Activated T-helper 1 cell treated with anti-CD3 and anti-CD28 coated beads, Interleukin-12 subunit alpha, Interleukin-12 subunit beta, Interleukin-2, Interleukin-4 antibody, amounts not matched to agents 30 ng/mL and 10 ng/mL and 1 ng/mL, durations not matched to agents 14 hours and 24 hours and 36 hours (primary cell): ENCODE measurements at regions of chr1 and their contacts with region 1.

Region 1: GRCh38 chr1:94335950-94336349 is 82.2 kb upstream of the ABCD3 start:
- DNase-seq: no peak
- H3K4me3 Mint-ChIP-seq: no peak overlapping the region
- H3K27ac Mint-ChIP-seq: no peak overlapping the region
- H3K4me1 Mint-ChIP-seq: no peaks in the 10 kb centered on the region
- H3K27me3 Mint-ChIP-seq: peaks cover 6% of the 10 kb centered on the region

Region 2: DNA sequence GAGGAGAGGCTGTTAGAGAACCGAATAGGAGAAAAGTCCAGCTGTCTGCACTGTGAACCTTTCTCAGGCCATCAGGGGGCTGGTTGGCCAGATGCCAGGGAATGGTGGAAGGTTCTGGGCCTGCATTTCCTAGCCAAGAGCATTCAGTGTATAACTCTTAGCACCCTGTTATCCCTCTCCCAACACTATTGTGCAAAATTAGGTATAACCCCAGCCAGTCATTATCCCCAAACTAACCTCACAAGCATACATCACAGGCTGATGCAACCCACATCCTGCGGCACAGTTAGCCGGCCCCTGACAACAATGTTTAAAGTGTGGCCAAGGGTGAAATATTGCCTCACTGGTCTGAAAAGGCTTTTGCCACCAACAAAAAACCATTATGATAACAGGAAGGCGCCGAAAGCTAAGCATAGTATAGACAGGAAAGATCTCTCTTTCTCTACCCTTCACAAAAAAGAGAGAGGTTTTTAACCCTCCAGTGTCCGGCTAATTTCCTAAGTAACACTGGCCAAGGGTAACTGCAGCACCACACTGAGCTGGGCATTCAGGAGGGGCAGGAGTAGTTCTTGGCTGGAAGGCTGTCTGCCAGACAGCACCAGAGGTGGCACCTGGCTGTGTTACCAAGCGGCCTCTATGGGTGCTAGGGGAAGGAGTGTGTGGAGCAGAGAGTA is 577.0 kb before region 1 on chr1:
- intact Hi-C with region 1: no loop called
- DNase-seq: peak; percentile 4
- H3K4me3 Mint-ChIP-seq: no peak overlapping the region
- H3K27ac Mint-ChIP-seq: no peak overlapping the region
- H3K4me1 Mint-ChIP-seq: peaks cover 14% of the 10 kb centered on the region
- H3K27me3 Mint-ChIP-seq: no peaks in the 10 kb centered on the region

Region 3: GRCh38 chr1:93839307-93839706 is 496.6 kb before region 1 on chr1:
- intact Hi-C with region 1: no loop called
- DNase-seq: no peak
- H3K4me3 Mint-ChIP-seq: no peak overlapping the region
- H3K27ac Mint-ChIP-seq: no peak overlapping the region
- H3K4me1 Mint-ChIP-seq: peaks cover 2% of the 10 kb centered on the region
- H3K27me3 Mint-ChIP-seq: peaks cover 4% of the 10 kb centered on the region

Region 4: GRCh38 chr1:94025383-94026340 is 310.3 kb before region 1 on chr1:
- intact Hi-C with region 1: loop called (anchors 1 kb)
- DNase-seq: no peak
- H3K4me3 Mint-ChIP-seq: no peak overlapping the region
- H3K27ac Mint-ChIP-seq: no peak overlapping the region
- H3K4me1 Mint-ChIP-seq: peaks cover 20% of the 10 kb centered on the region
- H3K27me3 Mint-ChIP-seq: peaks cover 12% of the 10 kb centered on the region

Region 5: DNA sequence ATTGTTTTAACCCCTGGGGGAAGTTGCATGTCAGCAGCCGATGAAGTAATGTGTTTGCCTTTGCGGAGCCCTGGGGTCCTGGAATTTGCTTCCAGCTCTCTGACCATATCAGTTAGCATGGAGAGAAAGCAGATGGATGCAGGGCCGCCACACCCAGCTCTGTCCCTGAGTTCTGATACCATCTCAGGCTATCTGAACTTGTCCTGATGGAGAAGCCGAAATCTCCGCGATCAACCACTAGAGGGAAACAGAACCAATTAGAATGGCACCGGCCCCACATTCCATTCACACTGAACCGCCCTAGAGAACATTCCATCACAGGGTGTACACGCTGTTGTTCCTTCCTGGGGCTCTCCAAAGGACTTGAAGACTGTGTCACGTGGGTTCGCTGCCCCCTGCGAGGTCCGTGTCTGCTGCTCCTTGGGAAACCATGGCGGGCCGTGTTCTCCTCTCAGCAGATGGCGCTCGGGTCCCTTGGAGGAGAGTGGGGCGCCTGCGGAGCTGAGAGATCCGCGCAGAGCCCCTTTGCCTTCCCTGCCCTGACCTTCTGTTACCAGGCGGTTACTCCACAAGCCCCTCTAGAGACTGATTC is 290.4 kb before region 1 on chr1:
- intact Hi-C with region 1: loop called (anchors 1 kb)
- DNase-seq: no peak
- H3K4me3 Mint-ChIP-seq: peak overlapping the region; percentile 54
- H3K27ac Mint-ChIP-seq: no peak overlapping the region
- H3K4me1 Mint-ChIP-seq: peaks cover 5% of the 10 kb centered on the region
- H3K27me3 Mint-ChIP-seq: peaks cover 6% of the 10 kb centered on the region

Region 6: DNA sequence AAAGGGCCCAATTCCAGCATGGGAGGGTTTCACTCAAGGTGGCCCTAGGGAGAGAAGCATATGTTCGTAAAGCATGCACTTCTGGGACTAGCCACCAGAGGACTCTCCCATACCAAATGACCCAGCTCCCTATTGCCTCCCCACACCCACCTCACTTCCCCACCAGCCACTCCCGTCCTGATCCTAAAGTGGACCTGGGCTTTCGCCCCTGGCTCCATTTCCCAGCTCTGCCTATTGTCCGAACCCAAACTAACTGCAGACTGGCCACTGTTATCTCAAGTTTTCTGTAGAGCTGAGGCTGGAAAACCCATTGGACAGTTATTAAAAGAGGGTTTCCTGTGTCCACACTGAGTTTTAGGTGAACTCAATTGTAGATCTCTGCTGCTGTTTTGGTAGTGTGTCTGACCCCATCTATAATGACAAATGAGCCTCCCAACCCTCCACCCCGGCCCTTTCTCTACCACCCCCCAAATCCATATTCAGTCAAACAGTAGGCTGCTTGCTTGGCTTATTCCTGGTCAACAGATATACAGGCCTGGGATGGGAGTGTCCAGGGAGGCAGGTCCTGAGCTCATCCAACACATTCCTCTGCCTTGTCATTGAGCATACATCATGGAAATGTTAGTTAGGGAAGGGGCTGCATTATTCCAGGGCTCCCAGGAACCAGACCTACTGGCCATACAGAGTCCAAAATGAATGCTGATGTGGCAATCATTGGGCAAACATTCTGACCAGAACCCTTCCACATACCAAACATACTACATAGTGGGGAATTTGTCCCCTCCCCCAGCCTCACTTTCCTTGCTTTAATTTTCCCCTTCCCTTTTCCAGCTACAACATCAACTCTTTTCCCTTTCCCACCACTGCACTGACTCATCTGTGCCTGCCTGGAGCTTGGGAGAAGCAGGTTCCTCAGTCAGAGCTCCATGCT is 274.2 kb before region 1 on chr1:
- intact Hi-C with region 1: loop called (anchors 1 kb)
- DNase-seq: peak; percentile 5
- H3K4me3 Mint-ChIP-seq: no peak overlapping the region
- H3K27ac Mint-ChIP-seq: no peak overlapping the region
- H3K4me1 Mint-ChIP-seq: no peaks in the 10 kb centered on the region
- H3K27me3 Mint-ChIP-seq: peaks cover 17% of the 10 kb centered on the region

Region 7: GRCh38 chr1:94237291-94238226 is 98.4 kb before region 1 on chr1 and contains the start of gene ARHGAP29:
- intact Hi-C with region 1: loop called (anchors 10 kb)
- DNase-seq: peak; percentile 40
- H3K4me3 Mint-ChIP-seq: peak within 1 kb of the TSS; percentile 46
- H3K27ac Mint-ChIP-seq: no peak within 1 kb of the TSS
- H3K4me1 Mint-ChIP-seq: peaks cover 9% of the 10 kb centered on the region
- H3K27me3 Mint-ChIP-seq: peaks cover 65% of the 10 kb centered on the region
- total RNA-seq, gene ARHGAP29: not detected in 2 replicates

Region 8: DNA sequence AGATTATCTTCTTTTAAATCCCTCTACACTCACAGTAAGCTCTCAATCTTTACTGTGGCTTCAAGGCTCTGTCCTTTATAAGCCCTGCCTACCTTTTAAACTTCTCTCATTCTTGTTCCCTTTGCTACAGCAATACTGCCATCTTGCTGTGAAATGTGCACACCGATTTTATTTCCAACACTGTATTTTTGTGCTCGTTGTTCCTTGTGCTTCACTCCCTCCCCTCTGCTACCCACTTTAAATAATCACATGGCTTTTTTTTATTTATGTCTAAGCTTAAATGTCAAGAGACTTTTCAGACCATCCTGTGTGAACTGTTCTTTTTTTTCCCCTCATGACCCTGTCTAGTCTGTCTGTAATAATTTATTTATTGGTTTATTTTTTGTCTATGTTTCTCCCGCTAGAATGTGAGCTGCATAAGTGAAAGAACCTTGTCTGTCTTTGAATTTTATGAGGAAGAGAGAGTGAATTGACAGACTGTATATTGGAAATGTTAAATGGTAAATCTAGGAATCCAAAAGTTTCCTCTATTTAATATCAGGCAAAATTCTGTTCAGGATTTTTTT is 127.9 kb after region 1 on chr1:
- intact Hi-C with region 1: loop called (anchors 5 kb)
- DNase-seq: no peak
- H3K4me3 Mint-ChIP-seq: no peak overlapping the region
- H3K27ac Mint-ChIP-seq: no peak overlapping the region
- H3K4me1 Mint-ChIP-seq: no peaks in the 10 kb centered on the region
- H3K27me3 Mint-ChIP-seq: no peaks in the 10 kb centered on the region

Region 9: DNA sequence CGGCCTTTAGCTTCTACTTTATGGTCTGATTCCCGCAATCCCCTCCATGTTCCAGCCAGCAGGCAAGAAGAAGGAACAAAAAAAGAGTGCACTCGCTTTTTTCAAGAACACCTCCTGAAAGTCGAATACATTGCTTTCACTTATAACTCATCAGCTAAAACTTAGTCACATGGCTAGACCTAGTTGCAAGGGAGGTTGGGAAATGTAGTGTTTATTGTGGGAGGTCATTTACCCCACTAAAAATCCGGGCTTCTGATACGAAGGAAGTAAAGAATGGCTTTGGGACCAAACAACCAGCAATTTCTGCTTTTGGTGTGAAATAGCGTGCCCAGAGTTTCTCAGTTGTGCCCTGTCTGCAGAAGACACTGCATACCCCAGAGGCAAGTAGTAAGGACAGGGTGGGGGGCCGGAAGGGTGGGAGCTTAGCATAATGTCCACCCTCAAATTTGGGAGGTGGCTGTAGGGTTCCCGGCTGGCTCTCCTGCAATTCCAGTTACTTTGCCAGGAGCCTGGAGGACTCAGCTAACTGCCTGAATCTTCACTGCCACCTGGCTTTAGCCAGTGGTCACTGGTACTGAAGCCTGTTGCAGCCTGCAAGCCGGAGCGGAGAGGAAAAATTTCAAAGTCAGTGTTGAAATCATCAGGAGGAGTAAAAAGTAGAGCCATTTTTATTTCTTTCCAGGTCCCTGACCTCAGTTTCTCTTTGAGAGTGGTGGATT is 263.3 kb after region 1 on chr1:
- intact Hi-C with region 1: no loop called
- DNase-seq: no peak
- H3K4me3 Mint-ChIP-seq: no peak overlapping the region
- H3K27ac Mint-ChIP-seq: no peak overlapping the region
- H3K4me1 Mint-ChIP-seq: peaks cover 27% of the 10 kb centered on the region
- H3K27me3 Mint-ChIP-seq: peaks cover 27% of the 10 kb centered on the region